Thyroid gland (tissue), 4 donors: ENCODE measurements at regions of chr14 and their contacts with region 1.

Region 1: DNA sequence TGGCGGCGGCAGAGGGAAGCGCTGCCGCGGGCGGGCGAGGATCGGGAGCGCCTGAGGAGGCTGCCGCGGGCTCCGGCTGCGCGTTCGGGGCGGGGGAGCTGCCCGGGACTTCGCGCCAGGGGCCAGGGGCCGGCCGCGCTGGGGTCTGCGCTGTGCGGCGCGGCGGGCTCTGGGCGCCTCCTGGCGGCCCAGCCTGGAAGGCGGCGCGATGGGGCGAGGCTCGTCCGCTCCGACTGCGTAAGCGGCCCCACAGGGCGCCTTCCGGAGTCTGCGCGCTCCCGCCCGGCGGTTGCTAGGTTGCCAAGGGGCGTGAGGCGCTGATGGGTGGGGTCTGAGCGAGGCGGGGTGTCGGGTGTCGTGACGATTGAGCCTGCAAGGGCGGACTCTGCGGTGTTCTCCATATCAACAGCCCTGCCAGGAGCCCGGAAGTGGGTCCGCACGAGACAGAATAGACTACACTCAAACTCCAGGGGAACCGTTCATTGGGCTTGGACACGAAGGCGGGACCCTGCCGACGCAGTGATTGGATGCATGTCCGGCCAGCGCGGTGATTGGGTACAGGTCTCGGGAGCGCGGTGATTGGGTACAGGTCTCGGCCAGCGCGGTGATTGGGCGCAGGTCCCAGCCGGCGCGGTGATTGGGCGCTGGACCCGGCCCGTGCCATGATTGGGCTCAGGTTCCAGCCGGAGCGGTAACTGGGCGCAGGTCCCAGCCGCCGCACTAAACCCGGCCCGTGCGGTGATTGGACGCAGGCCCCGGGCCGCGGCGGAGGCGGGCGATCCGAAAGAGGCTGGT is at the start of gene TEDC1:
- DNase-seq: peak; percentile 100
- H3K4me3 ChIP-seq: peak within 1 kb of the TSS; percentile 4 to 64 (median 58)
- H3K27ac ChIP-seq: peak within 1 kb of the TSS; percentile 91 to 97 (median 92)
- H3K4me1 ChIP-seq: peaks cover 36 to 44% of the 10 kb centered on the region in 2 donors
- H3K27me3 ChIP-seq: no peaks in the 10 kb centered on the region
- CTCF ChIP-seq: peak; percentile 20 to 99 (median 86)
- POLR2A ChIP-seq: peak; percentile 32 to 67
- total RNA-seq, gene TEDC1: 3.4 to 13.9 (median 8.5) TPM

Region 2: DNA sequence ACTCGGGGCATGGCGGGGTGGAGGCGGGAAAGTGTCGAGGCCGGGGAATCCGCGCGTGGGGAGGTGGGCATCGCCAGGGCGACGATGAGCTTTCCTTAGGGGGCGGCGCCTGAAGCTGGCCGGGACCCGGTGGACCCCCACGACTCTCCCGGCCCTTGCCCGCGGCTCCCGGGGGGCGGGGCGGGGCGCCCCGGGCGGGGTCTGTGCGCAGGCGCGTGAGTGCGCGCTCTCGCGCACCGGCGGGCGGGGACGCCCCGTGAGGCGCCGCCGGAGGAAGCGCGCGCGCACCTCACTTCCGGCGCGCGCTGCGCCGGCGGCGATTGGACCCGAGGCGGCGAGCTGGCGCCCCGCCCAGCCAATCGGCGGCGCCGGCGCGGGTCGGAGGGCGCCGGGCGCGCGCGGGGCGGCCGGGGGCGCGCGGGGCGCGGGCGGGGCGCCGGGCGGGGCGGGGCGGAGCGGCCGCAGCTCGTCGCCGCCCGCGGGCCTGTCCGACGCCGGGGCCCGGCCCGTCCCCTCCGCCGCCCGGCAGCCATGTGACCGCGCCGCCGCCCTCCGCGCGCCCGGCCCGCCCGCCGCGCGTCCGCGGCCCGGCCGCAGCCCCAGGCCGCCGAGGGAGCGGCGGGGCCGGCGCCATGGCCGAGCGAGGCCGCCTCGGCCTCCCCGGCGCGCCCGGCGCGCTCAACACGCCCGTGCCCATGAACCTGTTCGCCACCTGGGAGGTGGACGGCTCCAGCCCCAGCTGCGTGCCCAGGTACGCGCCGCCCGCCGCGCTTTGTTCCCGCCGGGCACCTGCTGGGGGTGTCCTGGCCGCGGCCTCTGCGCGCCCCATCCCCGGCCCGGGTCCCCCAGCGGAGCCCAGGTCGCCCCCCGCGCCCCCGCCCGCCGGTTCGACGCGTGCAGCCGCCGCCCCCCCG is 176.2 kb before region 1 on chr14 and contains the start of gene PACS2:
- intact Hi-C with region 1: loop called (anchors 5 kb)
- DNase-seq: peak; percentile 76
- H3K4me3 ChIP-seq: peak within 1 kb of the TSS; percentile 30 to 86 (median 60)
- H3K27ac ChIP-seq: peak within 1 kb of the TSS; percentile 82 to 93 (median 84)
- H3K4me1 ChIP-seq: peaks cover 16 to 33% of the 10 kb centered on the region in 2 donors
- H3K27me3 ChIP-seq: no peaks in the 10 kb centered on the region
- CTCF ChIP-seq: no peak
- POLR2A ChIP-seq: peak in 1 of 2 donors; percentile 46
- total RNA-seq, gene PACS2: 54.6 to 85.2 (median 72.1) TPM

Region 3: GRCh38 chr14:105366386-105367074 is 124.2 kb before region 1 on chr14:
- intact Hi-C with region 1: loop called (anchors 5 kb)
- DNase-seq: no peak
- H3K4me3 ChIP-seq: no peak overlapping the region
- H3K27ac ChIP-seq: no peak overlapping the region
- H3K4me1 ChIP-seq: no peaks in the 10 kb centered on the region
- H3K27me3 ChIP-seq: no peaks in the 10 kb centered on the region
- CTCF ChIP-seq: no peak
- POLR2A ChIP-seq: no peak

Region 4: DNA sequence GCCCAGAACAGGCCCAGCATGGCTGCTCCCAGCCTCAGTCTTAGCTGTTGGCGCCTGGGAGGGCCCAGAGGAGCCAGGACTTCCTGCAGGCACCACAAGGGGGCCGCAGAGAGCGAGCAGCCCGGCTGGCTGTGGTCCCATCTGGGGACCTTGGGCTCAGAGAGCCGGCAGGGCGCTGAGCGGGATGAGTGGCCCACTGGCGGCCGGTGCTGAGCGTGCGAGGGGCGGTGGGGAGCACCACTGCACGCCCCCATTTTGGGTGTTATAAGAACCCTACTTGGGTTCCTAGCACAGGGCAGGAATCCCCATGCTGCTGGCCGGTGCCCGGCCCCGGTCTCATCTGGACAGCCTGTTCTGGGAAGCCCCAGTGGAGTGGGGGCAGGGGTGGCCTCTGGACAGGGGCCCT is 42.1 kb before region 1 on chr14:
- intact Hi-C with region 1: loop called (anchors 5 kb)
- DNase-seq: peak; percentile 68 to 75
- H3K4me3 ChIP-seq: no peak overlapping the region
- H3K27ac ChIP-seq: no peak overlapping the region
- H3K4me1 ChIP-seq: peaks cover 3 to 9% of the 10 kb centered on the region in 2 donors
- H3K27me3 ChIP-seq: no peaks in the 10 kb centered on the region
- CTCF ChIP-seq: peak; percentile 75 to 97 (median 91)
- POLR2A ChIP-seq: no peak

Region 5: GRCh38 chr14:105589161-105590062 is 98.6 kb after region 1 on chr14:
- intact Hi-C with region 1: no loop called
- DNase-seq: no peak
- H3K4me3 ChIP-seq: no peak overlapping the region
- H3K27ac ChIP-seq: no peak overlapping the region
- H3K4me1 ChIP-seq: no peaks in the 10 kb centered on the region
- H3K27me3 ChIP-seq: no peaks in the 10 kb centered on the region
- CTCF ChIP-seq: no peak
- POLR2A ChIP-seq: no peak

Region 6: DNA sequence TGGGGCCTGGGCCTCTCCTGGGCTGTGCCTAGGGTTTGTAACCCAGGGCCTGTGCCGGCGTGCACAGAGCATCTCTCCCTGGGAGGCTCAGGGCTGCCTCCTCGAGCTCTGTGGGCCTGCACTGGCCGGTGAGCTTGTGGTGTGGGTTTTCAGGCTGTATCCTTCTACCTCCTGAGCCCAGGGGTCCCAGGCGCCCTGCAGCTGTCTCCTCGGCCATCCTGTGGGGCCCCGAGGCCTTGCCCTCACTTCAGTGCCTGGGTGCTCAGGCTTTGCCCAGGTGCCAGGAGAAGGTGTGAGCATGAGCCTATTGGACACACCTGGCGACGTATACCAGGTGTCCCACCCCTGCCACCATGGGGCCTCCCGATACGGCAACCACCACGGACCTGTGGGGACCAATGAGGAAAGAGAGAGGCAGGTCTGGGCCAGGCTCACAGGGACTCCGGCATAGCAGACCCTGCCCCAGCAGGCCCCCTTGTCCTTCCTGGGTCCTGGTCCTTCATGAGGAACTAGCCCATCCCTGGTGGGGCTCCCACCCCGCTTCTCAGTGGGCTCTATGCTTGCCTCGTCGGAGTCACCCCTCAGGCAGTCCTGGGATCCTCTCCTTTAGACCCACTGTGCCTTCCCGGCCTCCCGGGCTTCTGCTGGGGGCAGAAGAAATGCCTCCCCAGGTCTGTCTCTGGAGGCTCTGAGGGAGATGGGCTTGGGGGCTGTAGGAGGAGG is 435.8 kb after region 1 on chr14:
- intact Hi-C with region 1: no loop called
- DNase-seq: no peak
- H3K4me3 ChIP-seq: no peak overlapping the region
- H3K27ac ChIP-seq: no peak overlapping the region
- H3K4me1 ChIP-seq: no peaks in the 10 kb centered on the region
- H3K27me3 ChIP-seq: no peaks in the 10 kb centered on the region
- CTCF ChIP-seq: no peak
- POLR2A ChIP-seq: no peak